ENCODE measurements at regions of chr9 and their contacts with region 1.

Region 1: GRCh38 chr9:68584189-68585033 is 43.7 kb upstream of the TMEM252 start:
- DNase-seq: peak; percentile 38
- H3K4me3 ChIP-seq: no peak overlapping the region
- H3K27ac ChIP-seq: no peak overlapping the region
- H3K4me1 ChIP-seq: peaks cover 0 to 6% (median 0%) of the 10 kb centered on the region in 3 donors
- H3K27me3 ChIP-seq: no peaks in the 10 kb centered on the region
- CTCF ChIP-seq: peak; percentile 90 to 99 (median 97)
- POLR2A ChIP-seq: no peak

Region 2: GRCh38 chr9:68446836-68447235 is 137.6 kb before region 1 on chr9:
- intact Hi-C with region 1: no loop called
- DNase-seq: no peak
- H3K4me3 ChIP-seq: no peak overlapping the region
- H3K27ac ChIP-seq: peak overlapping the region in 3 of 4 donors; percentile 64 to 77 (median 73)
- H3K4me1 ChIP-seq: peaks cover 0 to 4% (median 0%) of the 10 kb centered on the region in 3 donors
- H3K27me3 ChIP-seq: no peaks in the 10 kb centered on the region
- CTCF ChIP-seq: no peak
- POLR2A ChIP-seq: no peak

Region 3: GRCh38 chr9:68999393-69000105 is 415.1 kb after region 1 on chr9:
- intact Hi-C with region 1: loop called (anchors 5 kb)
- DNase-seq: no peak
- H3K4me3 ChIP-seq: no peak overlapping the region
- H3K27ac ChIP-seq: no peak overlapping the region
- H3K4me1 ChIP-seq: no peaks in the 10 kb centered on the region
- H3K27me3 ChIP-seq: peaks cover 0 to 3% (median 1%) of the 10 kb centered on the region in 4 donors
- CTCF ChIP-seq: peak; percentile 38 to 79 (median 64)
- POLR2A ChIP-seq: no peak